ENCODE measurements at regions of chr10 and their contacts with region 1.

Region 1: GRCh38 chr10:101467286-101467770 is 113.4 kb downstream of the BTRC start:
- DNase-seq: peak; percentile 52
- H3K4me3 ChIP-seq: no peak overlapping the region; a peak in 1 of 4 replicates
- H3K27ac ChIP-seq: no peak overlapping the region; a peak in 1 of 4 replicates
- H3K4me1 ChIP-seq: peaks cover 0 to 13% of the 10 kb centered on the region in 2 experiments; a peak in 2 of 4 replicates
- H3K27me3 ChIP-seq: no peaks in the 10 kb centered on the region
- CTCF ChIP-seq: peak; percentile 91
- EP300 ChIP-seq: no peak
- RAD21 ChIP-seq: peak; percentile 80

Region 2: DNA sequence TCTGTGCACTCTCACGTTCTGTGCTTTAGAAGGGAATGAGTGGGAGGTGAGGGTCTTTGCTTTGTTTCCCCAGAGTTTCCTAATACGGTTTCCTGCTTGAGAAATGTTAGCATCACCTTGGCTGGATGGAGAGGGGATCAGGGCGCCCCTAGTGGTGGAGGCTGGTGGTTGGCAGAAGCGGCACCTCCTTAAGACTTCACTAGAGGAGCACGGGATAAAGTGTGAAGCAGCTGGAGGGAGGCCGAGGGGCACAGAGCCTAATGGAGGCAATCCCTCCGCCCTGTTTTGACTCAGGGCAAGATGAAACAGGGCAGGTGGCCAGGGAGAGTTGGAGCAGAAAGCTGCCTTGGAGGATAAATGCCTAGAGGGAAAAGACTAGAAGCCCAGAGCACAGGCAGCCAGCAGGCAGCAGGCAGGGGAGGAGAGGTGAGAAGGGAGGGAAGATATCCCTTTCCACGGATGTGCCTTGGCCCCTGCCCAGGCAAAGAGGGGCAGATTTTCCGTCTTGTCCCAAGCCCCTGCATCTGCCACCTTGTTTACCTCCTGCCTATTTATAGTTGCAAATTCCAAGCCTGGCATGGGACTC is 169.3 kb before region 1 on chr10:
- CTCF ChIA-PET with region 1: interaction called, 108 read pairs
- POLR2A ChIA-PET with region 1: no interaction called
- DNase-seq: peak; percentile 61
- H3K4me3 ChIP-seq: peak overlapping the region in 1 of 2 experiments; percentile 33; a peak in 1 of 4 replicates
- H3K27ac ChIP-seq: no peak overlapping the region
- H3K4me1 ChIP-seq: peaks cover 0 to 5% of the 10 kb centered on the region in 2 experiments; a peak in 1 of 4 replicates
- H3K27me3 ChIP-seq: peaks cover 29% of the 10 kb centered on the region; the same call in 1 of the 2 replicates
- CTCF ChIP-seq: peak; percentile 78
- EP300 ChIP-seq: no peak
- RAD21 ChIP-seq: peak; percentile 29

Region 3: DNA sequence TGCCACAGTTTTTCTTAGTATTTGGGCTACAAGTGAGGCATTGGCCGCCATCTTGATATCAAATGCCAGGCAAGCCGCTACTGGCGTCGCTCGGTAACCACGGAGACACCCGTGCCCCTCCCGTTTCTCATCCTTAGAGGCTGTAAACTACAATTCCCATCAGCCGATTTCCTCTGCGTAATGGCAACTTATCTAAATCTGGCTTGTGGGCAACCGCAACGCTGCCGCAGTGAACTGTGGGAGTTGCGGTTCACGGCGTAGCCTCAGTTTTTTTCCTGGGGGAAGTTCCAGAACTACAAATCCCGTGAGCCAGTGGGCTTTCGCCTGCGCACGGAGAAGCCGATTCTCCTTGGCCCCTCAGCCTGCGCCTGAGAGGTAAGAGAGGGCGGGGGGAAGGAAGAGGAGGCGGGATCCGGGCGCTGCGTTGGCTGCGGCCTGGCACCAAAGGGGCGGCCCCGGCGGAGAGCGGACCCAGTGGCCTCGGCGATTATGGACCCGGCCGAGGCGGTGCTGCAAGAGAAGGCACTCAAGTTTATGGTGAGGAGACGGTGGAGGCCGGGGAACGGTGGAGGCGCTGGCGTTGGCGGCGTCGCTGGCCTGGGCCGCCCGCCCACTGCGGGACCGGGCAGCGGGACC is 113.5 kb before region 1 on chr10 and contains the start of gene BTRC:
- CTCF ChIA-PET with region 1: interaction called, 15 read pairs
- POLR2A ChIA-PET with region 1: no interaction called
- DNase-seq: peak; percentile 93
- H3K4me3 ChIP-seq: peak within 1 kb of the TSS; percentile 66 to 84
- H3K27ac ChIP-seq: peak within 1 kb of the TSS; percentile 83 to 89
- H3K4me1 ChIP-seq: peaks cover 7 to 9% of the 10 kb centered on the region in 2 experiments; a peak in 3 of 4 replicates
- H3K27me3 ChIP-seq: no peaks in the 10 kb centered on the region; the same call in 1 of the 2 replicates
- CTCF ChIP-seq: no peak
- EP300 ChIP-seq: no peak
- RAD21 ChIP-seq: no peak; the same call in 1 of the 2 replicates
- polyA plus RNA-seq, gene BTRC: 6.5 and 8.1 TPM in 2 replicates

Region 4: DNA sequence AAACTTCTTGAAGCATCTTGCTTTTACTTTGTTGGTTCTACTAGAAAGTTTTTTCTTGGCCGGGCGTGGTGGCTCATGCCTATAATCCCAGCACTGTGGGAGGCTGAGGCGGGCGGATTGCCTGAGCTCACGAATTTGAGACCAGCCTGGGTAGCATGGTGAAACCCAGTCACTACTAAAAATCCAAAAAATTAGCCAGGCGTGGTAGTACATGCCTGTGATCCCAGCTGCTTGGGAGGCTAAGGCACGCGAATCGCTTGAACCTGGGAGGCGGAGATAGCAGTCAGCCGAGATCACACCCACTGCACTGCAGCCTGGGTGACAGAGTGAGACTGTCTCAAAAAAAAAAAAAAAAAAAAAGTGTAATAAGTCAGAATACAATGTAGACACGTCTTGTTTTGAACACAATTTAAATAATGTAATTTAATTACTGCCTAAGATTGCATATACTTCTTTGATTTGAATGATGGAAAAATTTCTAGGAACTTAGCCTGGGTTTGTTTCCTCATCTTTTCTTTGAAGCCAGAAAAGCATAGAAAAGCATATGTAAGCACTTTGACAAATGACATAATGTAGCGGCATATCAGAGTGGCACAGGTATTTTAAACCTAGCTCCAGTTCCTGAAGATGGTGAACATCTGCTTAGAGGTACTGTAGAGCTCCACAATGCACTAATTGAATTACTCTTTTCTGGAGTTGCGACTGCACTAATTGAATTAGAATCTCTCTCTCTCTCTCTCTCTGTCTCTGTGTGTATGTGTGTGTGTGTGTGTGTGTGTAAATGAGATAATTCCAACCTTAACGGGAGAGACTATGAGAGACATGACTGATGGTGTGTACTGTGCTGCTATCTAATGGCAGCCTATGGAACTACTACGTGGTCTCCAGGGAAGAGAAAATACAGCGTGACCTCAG is 25.5 kb before region 1 on chr10:
- CTCF ChIA-PET with region 1: interaction called, 80 read pairs
- POLR2A ChIA-PET with region 1: no interaction called
- DNase-seq: peak; percentile 65
- H3K4me3 ChIP-seq: no peak overlapping the region
- H3K27ac ChIP-seq: no peak overlapping the region
- H3K4me1 ChIP-seq: peaks cover 0 to 9% of the 10 kb centered on the region in 2 experiments; a peak in 2 of 4 replicates
- H3K27me3 ChIP-seq: no peaks in the 10 kb centered on the region
- CTCF ChIP-seq: peak; percentile 68
- EP300 ChIP-seq: no peak
- RAD21 ChIP-seq: peak; percentile 90

Region 5: DNA sequence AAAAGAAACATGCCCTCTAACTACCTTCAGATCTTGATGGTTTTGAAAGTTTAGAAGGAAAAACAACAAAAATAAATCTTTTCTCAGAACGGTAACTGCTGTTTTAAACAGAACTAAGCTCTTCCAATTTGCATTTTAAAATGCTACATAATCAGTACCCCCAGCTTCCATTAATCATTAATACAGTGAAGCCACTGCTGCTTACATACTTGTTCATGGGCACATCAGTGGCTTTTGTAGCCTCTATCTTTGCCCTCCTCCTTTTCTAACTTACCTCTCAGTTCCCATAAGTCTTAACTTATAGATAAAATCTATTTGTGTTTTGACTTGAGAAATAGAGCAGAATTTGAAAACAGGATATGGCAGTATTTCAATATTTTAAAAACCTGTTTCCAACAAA is 11.6 kb after region 1 on chr10:
- CTCF ChIA-PET with region 1: interaction called, 81 read pairs
- POLR2A ChIA-PET with region 1: no interaction called
- DNase-seq: no peak
- H3K4me3 ChIP-seq: no peak overlapping the region
- H3K27ac ChIP-seq: no peak overlapping the region
- H3K4me1 ChIP-seq: no peaks in the 10 kb centered on the region; a peak in 1 of 4 replicates
- H3K27me3 ChIP-seq: no peaks in the 10 kb centered on the region
- CTCF ChIP-seq: no peak
- EP300 ChIP-seq: no peak
- RAD21 ChIP-seq: no peak

Region 6: GRCh38 chr10:101611096-101611905 is 144.0 kb after region 1 on chr10:
- CTCF ChIA-PET with region 1: no interaction called
- POLR2A ChIA-PET with region 1: no interaction called
- DNase-seq: no peak
- H3K4me3 ChIP-seq: no peak overlapping the region
- H3K27ac ChIP-seq: no peak overlapping the region; a peak in 1 of 4 replicates
- H3K4me1 ChIP-seq: peaks cover 8 to 28% of the 10 kb centered on the region in 2 experiments; a peak in 2 of 4 replicates
- H3K27me3 ChIP-seq: no peaks in the 10 kb centered on the region
- CTCF ChIP-seq: no peak
- EP300 ChIP-seq: no peak
- RAD21 ChIP-seq: no peak

Region 7: DNA sequence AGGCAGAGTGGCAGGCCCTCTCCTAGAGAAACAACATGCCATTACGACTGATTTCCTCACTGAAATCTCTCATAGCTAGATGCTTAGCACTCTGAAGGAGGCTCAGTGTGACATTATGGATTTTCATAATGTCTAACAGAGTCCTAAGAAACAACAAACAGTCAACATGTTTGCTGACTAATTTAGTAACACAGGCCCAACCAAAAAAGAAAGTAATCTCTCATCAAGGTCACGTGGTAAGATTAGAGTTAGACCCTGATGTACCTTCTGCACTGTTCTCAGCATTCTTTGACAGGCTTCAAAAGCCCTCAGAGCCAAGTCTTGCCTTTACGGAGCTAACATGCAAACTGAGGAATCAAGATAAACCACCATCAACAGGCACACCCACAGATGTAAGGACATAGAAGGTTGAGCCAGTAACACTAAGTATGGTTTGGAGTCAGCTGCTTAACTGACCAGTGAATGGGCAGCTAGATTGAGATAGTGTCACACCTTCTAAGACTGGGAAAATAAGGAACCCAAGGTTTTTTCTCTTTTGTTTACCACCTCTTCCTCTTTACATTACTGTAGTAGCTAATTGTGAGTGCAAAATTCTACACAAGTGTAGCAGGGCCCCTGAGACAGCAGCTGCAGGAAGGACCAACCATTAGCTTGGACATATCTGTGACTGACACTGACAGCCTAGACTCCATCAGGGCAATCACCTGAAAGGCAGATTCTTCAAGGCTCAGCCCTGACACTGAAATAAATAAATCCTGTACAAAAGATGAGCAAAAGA is 391.6 kb after region 1 on chr10:
- CTCF ChIA-PET with region 1: no interaction called
- POLR2A ChIA-PET with region 1: no interaction called
- DNase-seq: no peak
- H3K4me3 ChIP-seq: no peak overlapping the region
- H3K27ac ChIP-seq: no peak overlapping the region
- H3K4me1 ChIP-seq: no peaks in the 10 kb centered on the region
- H3K27me3 ChIP-seq: no peaks in the 10 kb centered on the region
- CTCF ChIP-seq: no peak
- EP300 ChIP-seq: no peak
- RAD21 ChIP-seq: no peak